Right lobe of liver (tissue), 6 donors: ENCODE measurements at regions of chr1 and their contacts with region 1.

Region 1: GRCh38 chr1:150621497-150622302 is 7.7 kb downstream of the ENSA start:
- DNase-seq: no peak
- ATAC-seq: peak; percentile 53 to 75 (median 61)
- H3K4me3 ChIP-seq: no peak overlapping the region
- H3K27ac ChIP-seq: peak overlapping the region; percentile 41 to 55 (median 52)
- H3K4me1 ChIP-seq: peaks cover 0 to 29% (median 13%) of the 10 kb centered on the region in 4 donors
- H3K27me3 ChIP-seq: no peaks in the 10 kb centered on the region
- CTCF ChIP-seq: peak; percentile 69 to 85 (median 74)
- POLR2A ChIP-seq: no peak

Region 2: GRCh38 chr1:150561974-150562445 is 59.7 kb before region 1 on chr1:
- intact Hi-C with region 1: loop called in 1 of 2 experiments (anchors 5 kb)
- DNase-seq: peak; percentile 96 to 97 (median 97)
- ATAC-seq: peak; percentile 69 to 83 (median 76)
- H3K4me3 ChIP-seq: peak overlapping the region; percentile 39 to 62 (median 58)
- H3K27ac ChIP-seq: peak overlapping the region; percentile 94 to 99 (median 99)
- H3K4me1 ChIP-seq: peaks cover 0 to 68% (median 31%) of the 10 kb centered on the region in 4 donors
- H3K27me3 ChIP-seq: no peaks in the 10 kb centered on the region
- CTCF ChIP-seq: no peak
- POLR2A ChIP-seq: no peak

Region 3: GRCh38 chr1:150572918-150573647 is 48.6 kb before region 1 on chr1:
- intact Hi-C with region 1: loop called in 1 of 2 experiments (anchors 5 kb)
- DNase-seq: no peak
- ATAC-seq: no peak
- H3K4me3 ChIP-seq: no peak overlapping the region
- H3K27ac ChIP-seq: peak overlapping the region; percentile 96 to 99 (median 99)
- H3K4me1 ChIP-seq: peaks cover 0 to 63% (median 28%) of the 10 kb centered on the region in 4 donors
- H3K27me3 ChIP-seq: no peaks in the 10 kb centered on the region
- CTCF ChIP-seq: no peak
- POLR2A ChIP-seq: peak; percentile 68